Head of caudate nucleus (tissue), 42 donors: ENCODE measurements at regions of chr7 and their contacts with region 1.

Region 1: DNA sequence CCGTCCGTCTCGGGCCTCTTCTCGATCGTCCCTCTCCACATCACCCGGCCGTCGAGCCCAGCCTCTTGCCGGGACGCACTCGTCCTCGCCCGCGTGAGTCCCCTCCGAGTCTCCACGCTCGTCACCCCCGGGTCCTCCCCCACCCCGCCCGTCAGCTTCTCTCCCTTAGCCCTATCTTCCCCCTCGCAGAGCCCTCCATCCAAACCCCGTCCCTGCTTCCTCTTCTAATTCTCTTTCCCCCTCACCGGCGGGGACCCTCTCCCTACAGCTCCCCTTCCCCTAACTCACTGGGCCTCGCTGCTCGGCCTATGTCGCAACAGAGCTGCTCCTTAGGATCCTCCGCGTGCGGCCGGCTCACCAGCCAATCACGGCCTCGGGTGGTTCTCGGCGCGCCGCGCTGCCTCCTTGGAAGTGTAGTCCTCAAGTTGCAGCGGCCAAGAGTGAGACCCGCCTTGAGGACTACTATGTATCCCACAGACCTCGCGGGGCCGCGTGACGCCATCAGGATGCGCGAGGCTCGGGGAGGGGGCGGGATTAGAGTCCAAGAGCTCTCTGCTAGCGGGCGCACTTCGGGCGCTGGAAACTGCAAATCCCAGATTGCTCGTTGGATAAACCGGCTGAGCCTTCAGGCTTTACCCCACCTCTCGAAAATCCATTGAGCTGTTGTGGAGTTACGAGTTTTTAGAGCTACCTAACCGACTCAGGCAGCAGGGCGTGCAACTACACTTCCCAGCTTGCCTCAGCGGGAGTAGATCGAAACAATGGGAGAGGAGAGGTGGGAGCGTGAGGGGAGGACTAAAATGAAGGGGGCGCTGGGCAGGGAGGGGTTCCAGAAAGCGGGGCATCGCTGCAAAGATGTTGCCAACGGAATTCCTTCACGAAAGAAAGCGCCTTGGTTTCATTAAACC is at the start of gene ABCF2:
- DNase-seq: peak; percentile 97 to 100 (median 99)

Region 2: DNA sequence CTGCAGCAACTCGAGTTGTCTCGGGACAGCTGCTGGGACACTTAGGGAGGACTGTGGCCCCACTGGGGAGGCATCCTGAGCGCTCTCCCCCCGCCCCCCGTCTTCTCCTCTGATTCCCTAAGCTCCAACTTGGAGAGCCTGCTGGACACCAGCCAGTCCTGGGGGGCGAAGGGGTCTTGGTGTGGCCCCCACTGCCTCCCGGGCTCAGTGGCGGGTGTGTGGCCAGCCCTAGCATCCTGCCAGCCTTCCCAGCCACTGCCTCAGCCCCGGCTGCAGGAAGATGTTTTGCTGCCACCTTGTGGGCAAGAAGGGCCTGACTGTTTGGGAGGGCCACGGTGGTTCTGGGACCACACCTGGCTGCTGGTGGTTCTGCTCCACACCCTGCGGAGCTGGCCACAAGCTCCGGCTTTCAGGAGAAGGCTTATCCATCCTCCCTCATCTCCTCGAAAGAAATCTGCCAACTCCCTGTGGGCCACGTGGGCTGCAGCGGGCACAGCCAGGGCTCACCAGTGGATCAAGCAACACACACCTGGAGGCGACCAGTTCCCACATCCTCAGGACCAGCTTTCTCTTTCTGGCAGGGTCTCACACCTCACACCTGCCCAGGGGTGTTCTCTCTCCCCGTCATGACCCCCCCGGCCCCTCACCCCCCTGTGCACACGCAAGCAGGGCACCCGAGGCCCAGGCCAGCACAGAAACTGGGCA is 116.0 kb before region 1 on chr7:
- intact Hi-C with region 1: loop called (anchors 5 kb)
- DNase-seq: peak; percentile 62 to 93 (median 82)

Region 3: GRCh38 chr7:151315038-151315655 is 88.0 kb after region 1 on chr7:
- intact Hi-C with region 1: no loop called
- DNase-seq: peak; percentile 51 to 93 (median 78)

Region 4: GRCh38 chr7:151366166-151366879 is 139.2 kb after region 1 on chr7:
- intact Hi-C with region 1: no loop called
- DNase-seq: peak in 2 of 42 donors; percentile 31 to 36

Region 5: DNA sequence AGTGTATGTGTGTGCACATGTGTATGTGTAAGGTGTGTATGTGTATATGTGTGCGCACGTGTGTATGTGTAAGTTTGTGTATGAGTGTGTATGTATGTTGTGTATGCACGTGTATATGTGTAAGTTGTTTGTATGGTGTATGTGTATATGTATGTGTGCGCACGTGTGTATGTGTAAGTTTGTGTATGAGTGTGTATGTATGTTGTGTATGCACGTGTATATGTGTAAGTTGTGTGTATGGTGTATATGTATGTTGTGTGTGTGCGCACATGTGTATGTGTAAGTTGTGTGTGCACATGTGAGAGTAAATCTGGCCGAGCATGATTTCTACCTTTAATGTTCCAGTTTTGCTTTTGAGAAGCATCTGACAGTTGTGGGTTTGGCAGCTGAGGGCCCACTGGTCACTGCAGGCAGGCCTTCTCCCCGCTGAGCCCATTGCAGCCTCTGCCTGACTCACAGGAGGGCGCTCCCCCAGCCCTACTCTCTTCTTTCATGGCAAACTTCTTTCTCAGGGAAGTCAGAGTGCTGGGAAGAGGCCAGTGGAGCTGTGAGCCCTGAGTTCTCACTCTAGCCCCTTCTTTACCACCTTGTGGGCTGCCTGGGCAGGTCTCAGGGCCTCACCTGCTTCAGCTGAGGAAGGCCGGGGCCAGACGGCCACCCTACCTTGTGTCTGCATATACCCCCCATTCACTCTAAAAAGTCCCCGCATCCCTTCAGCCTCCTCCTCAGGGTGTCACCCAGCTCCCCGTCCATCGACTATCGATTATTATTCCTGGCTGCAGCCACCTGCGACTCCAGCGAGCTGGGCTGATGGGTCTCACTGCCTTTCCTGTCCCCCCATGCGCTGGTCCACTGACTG is 171.5 kb after region 1 on chr7:
- intact Hi-C with region 1: no loop called
- DNase-seq: no peak

Region 6: DNA sequence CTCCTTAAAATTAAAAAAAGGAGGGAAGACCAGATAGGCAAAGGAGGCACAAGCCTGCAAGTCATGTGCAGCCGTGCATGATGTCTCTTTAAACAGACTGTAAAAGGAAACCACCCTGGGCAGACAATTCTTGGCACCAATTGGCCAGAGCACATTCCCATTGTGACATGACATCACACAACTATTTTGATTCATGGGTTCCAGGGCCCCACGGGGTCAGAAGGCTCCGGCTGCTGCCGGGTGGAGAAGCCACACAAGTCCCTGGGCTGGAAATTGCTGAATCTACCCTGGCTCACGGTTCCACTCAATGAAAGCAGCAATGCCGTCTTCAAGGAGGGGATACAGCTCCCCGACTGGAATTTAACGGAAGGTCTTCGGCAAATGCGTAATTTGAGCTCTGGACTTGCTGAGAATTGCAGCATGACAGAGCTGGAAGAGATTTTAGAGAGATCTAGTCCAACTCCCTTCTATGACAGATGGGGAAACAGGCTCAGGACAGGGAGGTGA is 509.3 kb after region 1 on chr7:
- intact Hi-C with region 1: no loop called
- DNase-seq: no peak